PC-9 (cell line): ENCODE measurements at regions of chr1 and their contacts with region 1.

Region 1: GRCh38 chr1:246497331-246497915 is 9.7 kb downstream of the SMYD3 start:
- DNase-seq: peak in 1 of 2 experiments; percentile 53
- H3K4me3 ChIP-seq: no peak overlapping the region
- H3K27ac ChIP-seq: no peak overlapping the region
- H3K4me1 ChIP-seq: peaks cover 3% of the 10 kb centered on the region
- H3K27me3 ChIP-seq: no peaks in the 10 kb centered on the region
- CTCF ChIP-seq: peak; percentile 82

Region 2: DNA sequence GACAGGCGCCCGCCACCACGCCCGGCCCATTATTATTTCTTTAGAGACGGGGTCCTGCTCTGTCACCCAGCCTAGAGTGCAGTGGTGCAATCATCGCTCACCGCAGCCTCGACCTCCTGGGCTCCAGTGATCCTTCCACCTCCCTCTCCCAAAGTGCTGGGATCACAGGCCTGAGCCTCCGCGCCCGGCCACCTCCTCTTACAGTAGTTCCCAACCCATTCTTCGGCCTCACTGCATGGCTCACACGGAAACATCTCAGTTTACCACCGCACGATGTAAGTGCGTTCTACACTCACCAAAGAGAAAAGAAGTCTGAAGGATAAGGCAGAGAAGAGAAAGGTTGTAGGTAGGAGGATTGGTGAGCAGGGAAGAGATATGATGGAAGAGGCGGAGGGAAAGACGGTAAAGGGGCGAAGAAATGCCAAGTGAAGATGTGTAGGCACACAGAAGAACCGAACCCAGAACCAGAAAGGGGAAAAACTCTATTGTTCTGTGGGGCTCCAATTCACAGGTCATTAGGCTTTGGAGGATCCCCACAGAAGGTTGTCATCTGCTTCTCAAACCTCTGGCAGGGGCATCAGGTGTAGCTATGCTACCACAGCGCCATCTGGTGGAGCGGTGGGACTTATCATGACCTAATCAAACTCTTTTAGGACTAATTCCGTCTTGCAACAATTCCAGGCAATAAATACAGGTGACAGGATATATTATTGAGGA is 494.5 kb before region 1 on chr1:
- CTCF ChIA-PET with region 1: no interaction called
- POLR2A ChIA-PET with region 1: no interaction called
- intact Hi-C with region 1: loop called (anchors 2 kb)
- DNase-seq: peak in 1 of 2 experiments; percentile 71
- H3K4me3 ChIP-seq: no peak overlapping the region
- H3K27ac ChIP-seq: no peak overlapping the region
- H3K4me1 ChIP-seq: no peaks in the 10 kb centered on the region; the same call in 1 of the 2 replicates
- H3K27me3 ChIP-seq: no peaks in the 10 kb centered on the region
- CTCF ChIP-seq: peak; percentile 83

Region 3: DNA sequence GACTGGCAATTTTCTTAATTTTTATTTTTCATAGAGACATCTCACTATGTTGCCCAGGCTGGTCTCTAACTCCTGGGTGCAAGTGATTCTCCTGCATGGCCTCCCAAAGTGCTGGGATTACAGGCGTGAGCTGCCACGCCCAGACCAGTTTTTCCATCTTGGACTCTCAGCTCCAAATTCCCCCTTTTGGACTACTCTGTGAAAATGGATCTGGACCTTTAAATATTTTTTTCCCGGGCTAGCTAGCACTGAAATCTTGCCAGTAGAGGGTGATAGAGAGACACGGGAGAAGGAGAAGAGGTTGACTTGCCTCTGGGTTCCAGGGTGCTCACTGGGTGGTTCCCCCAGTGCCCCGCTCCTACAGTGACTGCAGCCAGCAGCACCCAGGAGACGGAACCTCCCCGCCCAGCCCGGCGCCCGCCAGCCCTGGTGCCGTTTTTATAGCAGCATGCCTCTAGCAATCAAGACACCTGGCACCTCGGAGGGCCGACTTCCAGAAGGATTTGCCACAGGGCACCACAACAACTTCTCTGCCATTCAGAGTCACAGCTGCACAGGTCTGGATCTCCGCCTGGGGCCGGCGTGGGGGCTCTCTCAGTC is 192.1 kb after region 1 on chr1:
- CTCF ChIA-PET with region 1: interaction called, 3 read pairs
- POLR2A ChIA-PET with region 1: no interaction called
- intact Hi-C with region 1: loop called (anchors 2 kb)
- DNase-seq: peak; percentile 61
- H3K4me3 ChIP-seq: peak overlapping the region; percentile 54; the same call in 1 of the 2 replicates
- H3K27ac ChIP-seq: no peak overlapping the region
- H3K4me1 ChIP-seq: 0 out of 2 replicates have a peak, but pooled peaks cover 3% of the 10 kb centered on the region
- H3K27me3 ChIP-seq: no peaks in the 10 kb centered on the region
- CTCF ChIP-seq: peak; percentile 79

Region 4: DNA sequence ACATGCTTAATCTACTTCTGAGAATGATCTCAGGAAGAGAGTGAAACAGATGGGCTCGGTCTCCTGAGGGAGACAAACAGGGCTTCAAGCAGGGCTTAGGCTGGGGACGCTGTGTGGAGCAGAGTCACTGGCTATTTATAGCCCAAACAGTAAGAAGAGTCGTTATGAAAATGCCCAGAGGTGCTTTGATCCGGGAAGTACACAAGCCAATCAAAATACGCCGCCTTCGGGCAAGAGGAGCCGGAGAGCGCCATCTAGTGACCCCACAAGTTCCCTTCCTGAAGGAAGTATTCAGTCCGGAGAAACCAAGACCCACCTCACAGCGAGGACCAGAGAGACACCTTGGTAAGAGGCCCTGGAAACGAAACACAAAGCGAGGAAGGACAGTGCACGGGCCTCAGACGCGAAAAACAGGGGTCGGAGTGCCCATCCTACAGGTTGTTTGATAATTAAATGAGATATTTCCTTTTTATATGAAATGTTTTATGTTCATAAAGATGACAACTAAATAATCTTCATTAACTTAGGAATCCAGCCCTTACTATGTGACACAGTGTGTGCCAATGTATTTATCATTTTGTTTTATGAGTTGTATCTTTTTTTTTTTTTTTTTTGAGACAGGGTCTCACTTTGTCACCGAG is 201.8 kb after region 1 on chr1:
- CTCF ChIA-PET with region 1: no interaction called
- POLR2A ChIA-PET with region 1: no interaction called
- intact Hi-C with region 1: loop called (anchors 1 kb)
- DNase-seq: peak; percentile 76 to 79
- H3K4me3 ChIP-seq: peak overlapping the region; percentile 20; the same call in 1 of the 2 replicates
- H3K27ac ChIP-seq: no peak overlapping the region
- H3K4me1 ChIP-seq: no peaks in the 10 kb centered on the region
- H3K27me3 ChIP-seq: no peaks in the 10 kb centered on the region
- CTCF ChIP-seq: peak; percentile 79

Region 5: DNA sequence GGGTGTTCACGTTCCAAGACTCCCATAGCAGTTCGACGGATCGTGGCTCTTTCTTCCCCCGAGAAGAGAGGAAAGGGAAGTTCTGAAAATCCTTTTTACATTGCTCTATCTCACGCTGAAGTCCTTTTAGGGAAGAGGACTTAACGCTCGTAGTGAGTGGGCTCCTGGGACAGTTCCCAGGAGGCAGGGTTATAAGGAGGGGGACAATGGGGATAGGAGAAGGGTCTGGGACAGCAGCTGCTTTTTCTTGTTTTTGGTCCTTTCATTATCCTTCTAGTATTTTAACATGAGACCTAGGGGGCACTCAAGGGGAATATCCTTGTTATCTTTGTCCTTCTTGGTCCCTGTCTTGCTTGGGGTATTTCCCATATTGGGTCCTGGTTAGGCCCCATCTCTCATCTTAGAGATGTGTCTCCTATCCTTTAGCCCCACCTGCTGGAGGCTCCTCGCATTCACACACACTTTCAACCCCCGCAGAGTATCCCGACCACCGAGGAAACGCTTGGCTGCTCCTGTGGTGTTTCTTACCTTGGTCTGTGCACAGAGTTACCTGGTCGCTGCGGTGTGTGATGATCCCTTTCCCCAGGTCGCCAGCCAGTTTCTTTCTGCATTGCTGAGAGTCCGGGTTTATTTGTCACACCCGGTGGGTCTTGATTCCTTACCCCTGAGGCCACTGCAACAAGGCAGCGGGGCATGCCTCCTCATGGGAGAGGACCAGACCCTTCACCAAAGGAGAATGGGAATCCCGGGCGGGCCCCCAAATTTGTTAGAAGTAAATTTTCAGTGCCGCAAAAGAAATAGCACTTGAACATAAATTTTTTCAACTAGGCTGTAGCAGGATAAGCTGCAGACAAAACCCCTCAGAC is 256.5 kb after region 1 on chr1:
- CTCF ChIA-PET with region 1: no interaction called
- POLR2A ChIA-PET with region 1: no interaction called
- intact Hi-C with region 1: loop called (anchors 1 kb)
- DNase-seq: peak in 1 of 2 experiments; percentile 54
- H3K4me3 ChIP-seq: no peak overlapping the region
- H3K27ac ChIP-seq: no peak overlapping the region
- H3K4me1 ChIP-seq: no peaks in the 10 kb centered on the region
- H3K27me3 ChIP-seq: no peaks in the 10 kb centered on the region
- CTCF ChIP-seq: peak; percentile 82

Region 6: DNA sequence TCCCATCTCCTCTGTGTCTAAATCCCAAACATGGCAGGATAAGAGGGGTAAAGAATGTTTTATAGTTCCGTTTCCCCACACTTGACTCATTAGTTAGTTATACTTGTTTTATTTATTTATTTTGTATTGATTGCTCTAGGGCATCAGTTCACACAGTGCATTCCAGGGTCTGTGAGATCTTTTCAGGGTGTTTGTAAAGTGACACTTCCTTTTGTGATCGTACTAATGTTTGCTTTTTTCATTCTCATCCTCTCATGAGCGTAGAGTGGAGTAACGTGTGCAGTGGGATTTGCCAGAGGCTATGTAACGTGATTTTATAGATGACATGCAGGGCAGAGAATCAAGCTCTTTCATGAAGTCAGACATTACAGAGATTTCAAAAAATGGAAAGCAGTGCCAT is 330.0 kb after region 1 on chr1:
- CTCF ChIA-PET with region 1: no interaction called
- POLR2A ChIA-PET with region 1: no interaction called
- intact Hi-C with region 1: no loop called
- DNase-seq: peak in 1 of 2 experiments; percentile 80
- H3K4me3 ChIP-seq: no peak overlapping the region
- H3K27ac ChIP-seq: no peak overlapping the region
- H3K4me1 ChIP-seq: peaks cover 6% of the 10 kb centered on the region; the same call in 1 of the 2 replicates
- H3K27me3 ChIP-seq: no peaks in the 10 kb centered on the region
- CTCF ChIP-seq: no peak